A549 (cell line): ENCODE measurements at regions of chr7 and their contacts with region 1.

Region 1: GRCh38 chr7:94449148-94449725 is 54.5 kb downstream of the COL1A2 start:
- DNase-seq: peak; percentile 28 to 57
- ATAC-seq: 0 out of 6 replicates have a peak, but pooled peaks of 1 of the 2 experiments have one; percentile 36
- H3K4me3 ChIP-seq: no peak overlapping the region
- H3K27ac ChIP-seq: no peak overlapping the region
- H3K4me1 ChIP-seq: no peaks in the 10 kb centered on the region
- CTCF ChIP-seq: peak; percentile 77
- EP300 ChIP-seq: no peak
- POLR2A ChIP-seq: no peak
- RAD21 ChIP-seq: peak; percentile 85 to 91

Region 2: GRCh38 chr7:94295850-94296249 is 153.4 kb before region 1 on chr7:
- CTCF ChIA-PET with region 1: interaction called, 10 read pairs
- POLR2A ChIA-PET with region 1: no interaction called
- DNase-seq: peak; percentile 18 to 64
- ATAC-seq: peak; percentile 76 to 87; a peak in 5 of 6 replicates
- H3K4me3 ChIP-seq: no peak overlapping the region
- H3K27ac ChIP-seq: peak overlapping the region in 1 of 2 experiments; percentile 55; a peak in 3 of 6 replicates
- H3K4me1 ChIP-seq: peaks cover 38% of the 10 kb centered on the region
- CTCF ChIP-seq: peak; percentile 66
- EP300 ChIP-seq: no peak
- POLR2A ChIP-seq: no peak
- RAD21 ChIP-seq: peak; percentile 82 to 83

Region 3: DNA sequence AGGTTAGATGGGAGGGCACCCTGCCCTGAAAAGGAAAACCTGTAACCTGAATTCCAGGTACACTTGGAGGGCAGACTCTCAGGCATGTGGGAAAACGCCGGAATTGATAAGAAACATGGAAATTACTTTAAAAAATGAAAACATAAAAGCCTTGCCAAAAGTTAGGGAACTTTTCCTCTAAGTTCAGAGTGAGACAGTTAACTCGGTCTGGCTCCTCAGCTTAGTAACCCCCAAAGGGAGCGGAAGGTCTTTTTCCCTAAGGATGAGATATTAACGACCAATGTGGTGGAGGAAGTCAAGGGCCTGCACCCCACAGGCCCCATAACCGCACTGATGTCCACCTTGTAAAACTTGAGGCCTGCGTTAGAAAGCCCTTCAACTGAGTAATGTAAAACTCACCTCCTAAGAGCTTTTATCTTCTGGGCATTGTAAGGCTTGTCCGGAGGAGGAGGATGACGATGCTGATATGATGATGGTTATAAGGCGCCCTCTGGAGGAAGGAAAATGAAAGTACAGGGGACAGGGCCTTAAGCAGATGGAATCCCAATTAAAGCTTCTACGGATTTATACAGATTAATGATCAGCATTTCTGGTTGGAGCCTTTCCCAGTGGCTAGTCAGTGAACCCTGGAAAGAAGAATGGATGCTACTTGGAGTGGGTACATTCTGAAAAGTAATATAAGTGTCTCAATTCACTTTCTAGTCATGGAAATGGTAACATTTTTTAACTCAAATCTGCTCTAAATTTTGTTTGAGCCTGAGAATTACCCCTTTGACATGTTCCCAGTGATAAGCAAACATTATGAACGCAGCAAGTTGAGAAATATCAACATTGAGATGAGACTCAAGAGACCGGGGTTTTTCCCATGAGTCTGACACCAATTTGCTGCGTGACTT is 53.8 kb before region 1 on chr7:
- CTCF ChIA-PET with region 1: no interaction called
- POLR2A ChIA-PET with region 1: no interaction called
- DNase-seq: peak; percentile 47 to 76
- ATAC-seq: peak; percentile 44 to 86; a peak in 5 of 6 replicates
- H3K4me3 ChIP-seq: no peak overlapping the region
- H3K27ac ChIP-seq: peak overlapping the region in 1 of 2 experiments; percentile 19; a peak in 1 of 6 replicates
- H3K4me1 ChIP-seq: peaks cover 19% of the 10 kb centered on the region
- CTCF ChIP-seq: peak; percentile 54
- EP300 ChIP-seq: no peak
- POLR2A ChIP-seq: no peak
- RAD21 ChIP-seq: peak; percentile 73 to 85

Region 4: DNA sequence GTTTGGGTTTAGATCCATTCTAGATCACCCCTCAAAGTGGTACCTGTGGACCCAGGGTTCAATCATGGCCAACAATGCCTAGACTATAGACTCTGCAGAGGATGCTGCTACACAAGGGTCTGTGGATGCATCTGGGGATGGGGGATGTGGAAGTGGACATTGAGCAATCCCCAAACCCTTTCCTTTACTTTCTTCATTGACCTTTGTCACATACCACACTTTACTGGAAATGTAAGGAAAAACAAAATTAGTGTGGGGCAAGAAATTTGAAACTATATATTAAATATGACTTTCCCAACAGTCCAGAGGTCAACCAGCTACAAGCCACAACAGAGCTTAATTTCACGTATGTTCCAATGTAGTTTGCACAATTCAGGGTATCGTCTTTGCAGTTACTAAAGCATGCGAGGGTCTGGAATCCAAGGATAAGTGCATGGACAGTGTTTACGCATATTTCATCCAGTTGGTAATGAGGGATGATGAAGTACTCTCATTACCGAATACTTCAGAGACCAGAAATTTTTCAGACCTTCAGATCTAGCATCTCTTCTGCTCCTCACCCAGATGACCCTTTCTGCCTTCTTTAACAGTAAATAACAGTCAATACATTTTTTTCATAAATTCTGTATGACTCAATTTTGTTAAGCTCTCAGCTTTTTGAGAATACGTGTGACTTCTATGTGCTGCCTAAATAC is 27.2 kb after region 1 on chr7:
- CTCF ChIA-PET with region 1: no interaction called
- POLR2A ChIA-PET with region 1: no interaction called
- DNase-seq: no peak
- ATAC-seq: no peak
- H3K4me3 ChIP-seq: no peak overlapping the region
- H3K27ac ChIP-seq: no peak overlapping the region
- H3K4me1 ChIP-seq: 0 out of 3 replicates have a peak, but pooled peaks cover 3% of the 10 kb centered on the region
- CTCF ChIP-seq: no peak
- EP300 ChIP-seq: no peak
- POLR2A ChIP-seq: no peak
- RAD21 ChIP-seq: no peak

Region 5: GRCh38 chr7:94591176-94591575 is 141.9 kb after region 1 on chr7:
- CTCF ChIA-PET with region 1: no interaction called
- POLR2A ChIA-PET with region 1: no interaction called
- DNase-seq: no peak
- ATAC-seq: no peak
- H3K4me3 ChIP-seq: no peak overlapping the region
- H3K27ac ChIP-seq: no peak overlapping the region
- H3K4me1 ChIP-seq: no peaks in the 10 kb centered on the region
- CTCF ChIP-seq: no peak
- EP300 ChIP-seq: no peak
- POLR2A ChIP-seq: no peak
- RAD21 ChIP-seq: no peak

Region 6: DNA sequence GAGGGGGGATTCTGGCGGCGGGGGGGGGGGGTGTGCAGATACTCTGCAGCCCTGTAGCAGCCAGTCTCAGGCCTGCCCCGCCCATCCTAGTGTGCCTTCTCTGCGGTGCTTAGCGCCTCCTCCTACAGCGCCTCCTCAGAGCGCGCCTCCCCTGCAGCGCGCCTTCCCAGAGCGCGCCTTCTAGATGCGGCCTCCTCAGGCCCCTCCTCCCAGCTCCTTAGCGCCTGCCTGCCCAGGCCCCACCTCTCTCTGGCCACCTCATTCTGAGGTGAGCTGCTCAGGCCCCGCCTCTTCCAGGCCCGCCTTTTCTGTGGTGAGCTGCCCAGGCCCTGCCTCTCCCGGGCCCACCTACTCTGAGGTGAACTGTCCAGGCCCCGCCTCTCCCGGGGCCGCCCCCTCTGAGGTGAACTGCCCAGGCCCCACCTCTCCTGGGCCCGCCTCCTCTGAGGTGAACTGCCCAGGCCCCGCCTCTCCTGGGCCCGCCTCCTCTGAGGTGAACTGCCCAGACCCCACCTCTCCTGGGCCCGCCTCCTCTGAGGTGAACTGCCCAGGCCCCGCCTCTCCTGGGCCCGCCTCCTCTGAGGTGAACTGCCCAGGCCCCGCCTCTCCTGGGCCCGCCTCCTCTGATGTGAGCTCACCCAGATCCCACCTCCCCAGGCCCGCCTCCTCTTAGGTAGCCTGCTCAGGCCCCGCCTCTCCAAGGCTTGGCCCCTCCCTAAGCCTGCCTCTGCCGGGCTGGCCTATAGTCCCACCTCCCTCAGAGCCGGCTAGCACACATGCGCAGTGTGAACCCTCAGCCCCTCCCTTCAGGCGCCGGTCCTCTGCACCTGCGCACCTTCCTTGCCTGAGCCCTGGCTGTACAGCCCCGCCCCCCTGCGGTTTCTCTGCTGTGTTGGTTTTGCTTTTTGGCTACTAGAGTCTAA is 208.8 kb after region 1 on chr7:
- CTCF ChIA-PET with region 1: interaction called, 18 read pairs
- POLR2A ChIA-PET with region 1: interaction called, 16 read pairs
- DNase-seq: peak; percentile 36 to 96
- ATAC-seq: peak; percentile 79 to 88
- H3K4me3 ChIP-seq: peak overlapping the region; percentile 64
- H3K27ac ChIP-seq: peak overlapping the region in 1 of 2 experiments; percentile 96; a peak in 2 of 6 replicates
- H3K4me1 ChIP-seq: peaks cover 31% of the 10 kb centered on the region
- CTCF ChIP-seq: no peak
- EP300 ChIP-seq: no peak
- POLR2A ChIP-seq: no peak
- RAD21 ChIP-seq: no peak

Region 7: GRCh38 chr7:95246831-95247370 is 797.7 kb after region 1 on chr7:
- CTCF ChIA-PET with region 1: interaction called, 23 read pairs
- POLR2A ChIA-PET with region 1: no interaction called
- DNase-seq: peak; percentile 57 to 89
- ATAC-seq: peak; percentile 92 to 97
- H3K4me3 ChIP-seq: no peak overlapping the region
- H3K27ac ChIP-seq: peak overlapping the region; percentile 6 to 80
- H3K4me1 ChIP-seq: peaks cover 32% of the 10 kb centered on the region
- CTCF ChIP-seq: peak; percentile 88
- EP300 ChIP-seq: no peak
- POLR2A ChIP-seq: no peak
- RAD21 ChIP-seq: peak; percentile 92 to 94

Region 8: GRCh38 chr7:95527033-95527775 is 1078.0 kb after region 1 on chr7:
- CTCF ChIA-PET with region 1: interaction called, 10 read pairs
- POLR2A ChIA-PET with region 1: no interaction called
- DNase-seq: peak; percentile 73 to 75
- ATAC-seq: peak; percentile 90 to 95
- H3K4me3 ChIP-seq: no peak overlapping the region
- H3K27ac ChIP-seq: peak overlapping the region; percentile 49 to 72
- H3K4me1 ChIP-seq: peaks cover 21% of the 10 kb centered on the region
- CTCF ChIP-seq: peak; percentile 94
- EP300 ChIP-seq: no peak
- POLR2A ChIP-seq: no peak
- RAD21 ChIP-seq: peak; percentile 97 to 98